Sigmoid colon (tissue), 7 donors: ENCODE measurements at regions of chr17 and their contacts with region 1.

Region 1: GRCh38 chr17:35254107-35254802 is 11.4 kb downstream of the SLFN5 start:
- DNase-seq: peak; percentile 89
- H3K4me3 ChIP-seq: no peak overlapping the region
- H3K27ac ChIP-seq: peak overlapping the region; percentile 75 to 85 (median 82)
- H3K4me1 ChIP-seq: peaks cover 0 to 61% (median 47%) of the 10 kb centered on the region in 4 donors
- H3K27me3 ChIP-seq: no peaks in the 10 kb centered on the region
- CTCF ChIP-seq: no peak
- EP300 ChIP-seq: peak in 1 of 4 donors; percentile 68
- POLR2A ChIP-seq: no peak

Region 2: GRCh38 chr17:35141681-35142466 is 112.4 kb before region 1 on chr17 and contains the start of gene NLE1:
- intact Hi-C with region 1: loop called (anchors 5 kb)
- DNase-seq: peak; percentile 85
- H3K4me3 ChIP-seq: peak within 1 kb of the TSS; percentile 72 to 78 (median 76)
- H3K27ac ChIP-seq: peak within 1 kb of the TSS in 2 of 4 donors; percentile 18 to 29
- H3K4me1 ChIP-seq: peaks cover 0 to 22% (median 16%) of the 10 kb centered on the region in 4 donors
- H3K27me3 ChIP-seq: no peaks in the 10 kb centered on the region
- CTCF ChIP-seq: peak; percentile 63 to 98 (median 79)
- EP300 ChIP-seq: no peak
- POLR2A ChIP-seq: no peak
- total RNA-seq, gene NLE1: 6.6 to 16.8 (median 11.4) TPM

Region 3: GRCh38 chr17:35568541-35568940 is 314.3 kb after region 1 on chr17:
- intact Hi-C with region 1: loop called (anchors 5 kb)
- DNase-seq: no peak
- H3K4me3 ChIP-seq: peak overlapping the region; percentile 51 to 70 (median 62)
- H3K27ac ChIP-seq: peak overlapping the region; percentile 84 to 87 (median 85)
- H3K4me1 ChIP-seq: peaks cover 0 to 30% (median 24%) of the 10 kb centered on the region in 4 donors
- H3K27me3 ChIP-seq: no peaks in the 10 kb centered on the region
- CTCF ChIP-seq: no peak
- EP300 ChIP-seq: no peak
- POLR2A ChIP-seq: no peak